ENCODE measurements at regions of chr12 and their contacts with region 1.

Region 1: GRCh38 chr12:110289044-110289710 is 8.1 kb downstream of the ATP2A2 start:
- DNase-seq: no peak
- H3K4me3 ChIP-seq: no peak overlapping the region
- H3K4me3 Mint-ChIP-seq: peak overlapping the region in 2 of 7 donors; percentile 42 to 48
- H3K27ac ChIP-seq: no peak overlapping the region
- H3K27ac Mint-ChIP-seq: peak overlapping the region in 7 of 8 donors; percentile 34 to 69 (median 56)
- H3K4me1 ChIP-seq: peaks cover 43% of the 10 kb centered on the region
- H3K4me1 Mint-ChIP-seq: peaks cover 49 to 64% (median 58%) of the 10 kb centered on the region in 3 donors
- H3K27me3 ChIP-seq: no peaks in the 10 kb centered on the region
- H3K27me3 Mint-ChIP-seq: no peaks in the 10 kb centered on the region

Region 2: GRCh38 chr12:110245369-110245772 is 43.8 kb before region 1 on chr12:
- CTCF ChIA-PET with region 1: no interaction called
- POLR2A ChIA-PET with region 1: no interaction called
- DNase-seq: peak; percentile 10 to 60 (median 15)
- H3K4me3 ChIP-seq: no peak overlapping the region
- H3K4me3 Mint-ChIP-seq: no peak overlapping the region
- H3K27ac ChIP-seq: no peak overlapping the region
- H3K27ac Mint-ChIP-seq: no peak overlapping the region
- H3K4me1 ChIP-seq: no peaks in the 10 kb centered on the region
- H3K4me1 Mint-ChIP-seq: no peaks in the 10 kb centered on the region
- H3K27me3 ChIP-seq: no peaks in the 10 kb centered on the region
- H3K27me3 Mint-ChIP-seq: peaks cover 13 to 15% of the 10 kb centered on the region in 2 donors

Region 3: GRCh38 chr12:110444455-110444854 is 155.3 kb after region 1 on chr12:
- CTCF ChIA-PET with region 1: no interaction called
- POLR2A ChIA-PET with region 1: no interaction called
- DNase-seq: no peak
- H3K4me3 ChIP-seq: no peak overlapping the region
- H3K4me3 Mint-ChIP-seq: peak overlapping the region in 1 of 7 donors; percentile 71
- H3K27ac ChIP-seq: no peak overlapping the region
- H3K27ac Mint-ChIP-seq: peak overlapping the region in 1 of 8 donors; percentile 23
- H3K4me1 ChIP-seq: peaks cover 14% of the 10 kb centered on the region
- H3K4me1 Mint-ChIP-seq: peaks cover 29 to 39% (median 37%) of the 10 kb centered on the region in 3 donors
- H3K27me3 ChIP-seq: no peaks in the 10 kb centered on the region
- H3K27me3 Mint-ChIP-seq: no peaks in the 10 kb centered on the region

Region 4: DNA sequence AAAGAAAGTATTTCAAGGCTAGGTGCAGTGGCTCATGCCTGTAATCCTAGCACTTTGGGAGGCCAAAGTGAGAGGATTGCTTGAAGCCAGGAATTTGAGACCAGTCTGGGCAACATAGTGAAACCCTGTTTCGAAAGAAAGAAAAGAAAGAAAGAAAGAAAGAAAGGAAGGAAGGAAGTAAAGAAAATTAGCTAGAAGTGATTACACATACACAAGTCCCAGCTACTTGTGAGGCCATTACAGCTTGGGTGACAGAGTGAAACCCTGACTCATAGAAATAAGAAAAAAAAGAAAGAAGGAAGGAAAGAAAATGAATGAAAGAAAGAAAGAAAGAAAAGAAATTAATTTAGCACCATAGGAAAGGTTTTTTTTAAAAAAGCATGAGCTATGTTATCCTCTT is 486.8 kb after region 1 on chr12:
- CTCF ChIA-PET with region 1: no interaction called
- POLR2A ChIA-PET with region 1: interaction called, 10 read pairs
- DNase-seq: no peak
- H3K4me3 ChIP-seq: no peak overlapping the region
- H3K4me3 Mint-ChIP-seq: no peak overlapping the region
- H3K27ac ChIP-seq: no peak overlapping the region
- H3K27ac Mint-ChIP-seq: peak overlapping the region in 4 of 8 donors; percentile 13 to 86 (median 40)
- H3K4me1 ChIP-seq: peaks cover 38% of the 10 kb centered on the region
- H3K4me1 Mint-ChIP-seq: peaks cover 32 to 62% (median 46%) of the 10 kb centered on the region in 3 donors
- H3K27me3 ChIP-seq: no peaks in the 10 kb centered on the region
- H3K27me3 Mint-ChIP-seq: no peaks in the 10 kb centered on the region